T-cell (primary cell): ENCODE measurements at regions of chr14 and their contacts with region 1.

Region 1: GRCh38 chr14:63641473-63642228 is at the start of gene WDR89:
- DNase-seq: peak; percentile 84 to 99 (median 96)
- ATAC-seq: peak; percentile 87 to 92 (median 90)
- H3K4me3 ChIP-seq: peak within 1 kb of the TSS; percentile 58 to 98
- H3K4me3 Mint-ChIP-seq: peak within 1 kb of the TSS; percentile 81 to 91 (median 90)
- H3K27ac ChIP-seq: peak within 1 kb of the TSS; percentile 94
- H3K27ac Mint-ChIP-seq: peak within 1 kb of the TSS; percentile 92 to 93
- H3K4me1 ChIP-seq: peaks cover 16 to 26% of the 10 kb centered on the region in 2 experiments
- H3K4me1 Mint-ChIP-seq: peaks cover 44 to 57% (median 54%) of the 10 kb centered on the region in 3 donors
- H3K27me3 ChIP-seq: no peaks in the 10 kb centered on the region
- H3K27me3 Mint-ChIP-seq: no peaks in the 10 kb centered on the region
- total RNA-seq, gene WDR89: 12.1 to 31.3 (median 25.7) TPM

Region 2: DNA sequence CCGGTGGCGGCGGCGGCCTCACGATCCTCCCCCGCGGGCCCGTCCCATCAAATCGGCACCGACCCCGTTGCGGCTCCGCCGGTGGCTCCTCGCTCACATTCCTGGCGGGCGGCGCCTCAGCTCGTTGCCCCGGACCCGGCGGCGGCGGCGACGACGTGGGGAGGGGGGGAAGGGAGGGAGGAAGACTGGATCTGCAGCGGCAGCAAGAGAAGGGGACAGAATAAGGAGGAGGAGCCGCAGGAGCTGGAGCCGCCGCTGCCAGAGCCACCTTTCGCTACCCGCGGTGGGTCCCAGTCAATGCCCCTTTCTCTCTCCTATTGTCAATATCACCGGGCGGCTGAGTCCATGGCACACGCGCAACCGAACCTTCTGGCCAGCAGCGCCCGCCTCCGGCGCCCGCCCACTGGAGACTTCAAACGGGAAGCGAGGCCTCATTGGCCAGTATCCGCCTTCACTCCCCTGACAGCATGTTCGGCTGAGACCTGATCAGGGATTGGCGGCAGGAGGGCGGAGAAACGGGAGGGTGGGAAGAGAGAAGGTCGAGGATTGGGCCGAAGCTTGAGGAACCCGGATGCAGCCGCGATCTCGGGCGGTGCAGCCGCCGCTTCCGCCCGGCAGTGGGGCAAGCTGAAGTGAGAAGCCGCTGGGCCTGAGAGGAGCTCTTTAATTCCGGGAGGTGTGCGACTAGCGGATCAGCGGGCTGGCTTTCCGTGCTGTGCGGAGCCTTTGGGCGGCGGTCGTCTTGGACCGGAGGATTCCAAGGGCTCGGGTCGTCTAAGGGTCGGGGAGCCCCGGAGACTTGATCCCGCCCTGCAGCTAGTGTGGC is 98.4 kb before region 1 on chr14 and contains the start of gene PPP2R5E:
- CTCF ChIA-PET with region 1: interaction called in 1 of 2 experiments, 3 read pairs
- POLR2A ChIA-PET with region 1: interaction called, 3 to 15 read pairs
- DNase-seq: peak; percentile 92 to 99 (median 98)
- ATAC-seq: peak; percentile 95 to 97 (median 96)
- H3K4me3 ChIP-seq: peak within 1 kb of the TSS; percentile 74 to 80
- H3K4me3 Mint-ChIP-seq: peak within 1 kb of the TSS; percentile 96 to 99 (median 96)
- H3K27ac ChIP-seq: peak within 1 kb of the TSS; percentile 77
- H3K27ac Mint-ChIP-seq: peak within 1 kb of the TSS; percentile 91 to 94
- H3K4me1 ChIP-seq: peaks cover 0 to 11% of the 10 kb centered on the region in 2 experiments
- H3K4me1 Mint-ChIP-seq: peaks cover 35 to 52% (median 40%) of the 10 kb centered on the region in 3 donors
- H3K27me3 ChIP-seq: no peaks in the 10 kb centered on the region
- H3K27me3 Mint-ChIP-seq: no peaks in the 10 kb centered on the region
- total RNA-seq, gene PPP2R5E: 35.5 to 45.1 (median 40.6) TPM

Region 3: DNA sequence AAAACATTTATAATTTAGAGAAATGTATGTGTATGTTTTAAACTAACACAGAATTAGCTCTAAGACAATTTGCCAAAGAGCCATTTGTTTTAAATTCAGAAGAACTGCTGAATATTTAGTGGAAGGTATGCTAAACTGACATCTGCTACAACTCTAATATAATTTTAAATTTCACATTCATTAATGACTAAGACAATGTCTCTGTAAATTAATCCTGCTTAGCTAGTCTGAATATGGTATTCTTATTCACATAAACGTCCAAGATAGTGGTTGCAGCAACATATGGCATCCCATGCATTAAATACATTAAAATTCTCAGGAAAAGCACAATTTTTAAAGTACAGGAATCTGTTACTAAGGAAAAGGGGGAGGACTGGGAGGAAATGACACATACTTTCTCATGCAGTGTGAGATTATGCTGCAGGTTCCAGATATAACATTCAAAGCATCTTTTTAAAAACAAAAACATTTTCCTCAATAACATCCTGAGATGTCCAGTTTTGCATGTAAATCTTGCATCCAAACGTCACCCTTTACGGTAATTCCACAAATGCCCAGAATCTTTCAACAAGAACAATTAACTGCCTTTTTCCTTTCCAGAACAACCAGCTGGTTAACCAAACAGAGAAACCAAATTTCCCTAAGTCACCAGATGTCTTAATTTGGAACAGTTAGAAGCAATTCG is 26.8 kb before region 1 on chr14:
- CTCF ChIA-PET with region 1: no interaction called
- POLR2A ChIA-PET with region 1: interaction called in 1 of 2 experiments, 13 read pairs
- DNase-seq: no peak
- ATAC-seq: no peak
- H3K4me3 ChIP-seq: no peak overlapping the region
- H3K4me3 Mint-ChIP-seq: no peak overlapping the region
- H3K27ac ChIP-seq: no peak overlapping the region
- H3K27ac Mint-ChIP-seq: peak overlapping the region in 1 of 2 donors; percentile 52
- H3K4me1 ChIP-seq: no peaks in the 10 kb centered on the region
- H3K4me1 Mint-ChIP-seq: peaks cover 45 to 50% (median 49%) of the 10 kb centered on the region in 3 donors
- H3K27me3 ChIP-seq: no peaks in the 10 kb centered on the region
- H3K27me3 Mint-ChIP-seq: no peaks in the 10 kb centered on the region

Region 4: GRCh38 chr14:63727774-63728728 is 86.4 kb after region 1 on chr14 and contains the start of gene SGPP1:
- CTCF ChIA-PET with region 1: interaction called in 1 of 2 experiments, 8 read pairs
- POLR2A ChIA-PET with region 1: interaction called, 7 to 14 read pairs
- DNase-seq: peak; percentile 61 to 91 (median 74)
- ATAC-seq: peak; percentile 89 to 92 (median 91)
- H3K4me3 ChIP-seq: peak within 1 kb of the TSS; percentile 77 to 84
- H3K4me3 Mint-ChIP-seq: peak within 1 kb of the TSS; percentile 99 to 100 (median 99)
- H3K27ac ChIP-seq: peak within 1 kb of the TSS; percentile 76
- H3K27ac Mint-ChIP-seq: peak within 1 kb of the TSS; percentile 94 to 97
- H3K4me1 ChIP-seq: peaks cover 14 to 21% of the 10 kb centered on the region in 2 experiments
- H3K4me1 Mint-ChIP-seq: peaks cover 45 to 49% (median 49%) of the 10 kb centered on the region in 3 donors
- H3K27me3 ChIP-seq: no peaks in the 10 kb centered on the region
- H3K27me3 Mint-ChIP-seq: no peaks in the 10 kb centered on the region
- total RNA-seq, gene SGPP1: 11.4 to 15.1 (median 13.5) TPM